ENCODE measurements at regions of chr1 and their contacts with region 1.

Region 1: GRCh38 chr1:91555821-91556531 is 55.3 kb downstream of the CDC7 start:
- DNase-seq: peak; percentile 58
- ATAC-seq: peak; percentile 32
- H3K4me3 ChIP-seq: no peak overlapping the region
- H3K27ac ChIP-seq: peak overlapping the region; percentile 57
- H3K4me1 ChIP-seq: peaks cover 27% of the 10 kb centered on the region
- H3K27me3 ChIP-seq: no peaks in the 10 kb centered on the region
- CTCF ChIP-seq: no peak

Region 2: GRCh38 chr1:91578332-91579109 is 22.5 kb after region 1 on chr1:
- CTCF ChIA-PET with region 1: no interaction called
- POLR2A ChIA-PET with region 1: no interaction called
- intact Hi-C with region 1: no loop called
- DNase-seq: peak; percentile 35
- ATAC-seq: no peak
- H3K4me3 ChIP-seq: no peak overlapping the region
- H3K27ac ChIP-seq: no peak overlapping the region
- H3K4me1 ChIP-seq: peaks cover 20% of the 10 kb centered on the region
- H3K27me3 ChIP-seq: no peaks in the 10 kb centered on the region
- CTCF ChIP-seq: no peak

Region 3: GRCh38 chr1:91697416-91697815 is 141.4 kb after region 1 on chr1:
- CTCF ChIA-PET with region 1: no interaction called
- POLR2A ChIA-PET with region 1: no interaction called
- intact Hi-C with region 1: loop called (anchors 10 kb)
- DNase-seq: no peak
- ATAC-seq: no peak
- H3K4me3 ChIP-seq: no peak overlapping the region
- H3K27ac ChIP-seq: no peak overlapping the region
- H3K4me1 ChIP-seq: no peaks in the 10 kb centered on the region
- H3K27me3 ChIP-seq: no peaks in the 10 kb centered on the region
- CTCF ChIP-seq: no peak

Measured in PC-3 (cell line).